AG04450 (cell line): ENCODE measurements at regions of chr7 and their contacts with region 1.

Region 1: DNA sequence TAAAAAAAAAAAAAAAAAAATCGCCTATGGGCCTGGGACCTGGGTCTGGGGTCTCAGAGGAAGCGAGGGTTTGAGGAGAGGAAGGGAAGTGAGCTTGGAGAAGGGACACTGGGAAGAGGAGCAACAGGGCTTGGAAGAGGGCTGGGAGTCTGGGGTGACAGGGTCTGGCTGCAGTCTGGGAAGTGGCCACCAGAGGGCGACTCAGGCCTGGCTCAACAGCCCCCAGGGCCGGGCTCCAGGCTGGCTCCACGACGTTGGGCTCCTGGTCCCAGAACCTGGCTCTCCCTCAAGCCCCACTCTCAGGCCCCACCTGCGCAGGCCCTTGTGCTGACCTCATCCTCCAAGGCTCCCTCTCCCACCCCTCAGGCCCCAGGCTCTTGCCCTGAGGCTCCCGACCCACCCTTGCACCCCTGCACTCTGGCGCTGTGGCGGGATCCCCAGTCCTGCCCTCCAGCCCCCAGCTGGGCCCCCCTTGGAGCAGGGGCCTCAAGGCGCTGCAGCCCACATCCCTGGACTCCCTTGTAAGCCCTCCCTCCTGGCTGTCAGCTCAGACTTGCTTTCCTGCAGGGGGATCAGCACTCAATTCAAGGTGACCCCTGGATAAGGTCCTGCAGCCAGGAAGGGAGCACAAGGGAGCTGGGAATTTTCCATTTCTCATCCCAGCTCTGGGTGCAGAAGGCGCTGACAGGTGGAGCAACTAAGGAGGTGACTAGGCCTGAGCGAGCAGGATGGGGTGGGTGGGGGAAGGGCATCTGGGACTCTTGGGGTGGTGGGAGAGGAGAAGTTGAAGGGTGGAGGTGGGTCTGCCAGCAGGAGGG is 5.4 kb upstream of the SPACDR start:
- DNase-seq: no peak
- H3K4me3 ChIP-seq: no peak overlapping the region
- H3K27ac ChIP-seq: no peak overlapping the region
- H3K27me3 ChIP-seq: no peaks in the 10 kb centered on the region
- CTCF ChIP-seq: peak; percentile 90

Region 2: GRCh38 chr7:100418930-100419659 is 50.3 kb before region 1 on chr7:
- CTCF ChIA-PET with region 1: no interaction called
- POLR2A ChIA-PET with region 1: no interaction called
- DNase-seq: no peak
- H3K4me3 ChIP-seq: no peak overlapping the region
- H3K27ac ChIP-seq: no peak overlapping the region
- H3K27me3 ChIP-seq: no peaks in the 10 kb centered on the region
- CTCF ChIP-seq: 0 out of 2 replicates have a peak, but pooled peaks have one; percentile 9

Region 3: GRCh38 chr7:100455206-100455605 is 14.2 kb before region 1 on chr7:
- CTCF ChIA-PET with region 1: interaction called, 12 read pairs
- POLR2A ChIA-PET with region 1: no interaction called
- DNase-seq: no peak
- H3K4me3 ChIP-seq: no peak overlapping the region
- H3K27ac ChIP-seq: no peak overlapping the region
- H3K27me3 ChIP-seq: no peaks in the 10 kb centered on the region
- CTCF ChIP-seq: no peak

Region 4: GRCh38 chr7:100575203-100575631 is 105.8 kb after region 1 on chr7:
- CTCF ChIA-PET with region 1: no interaction called
- POLR2A ChIA-PET with region 1: no interaction called
- DNase-seq: no peak
- H3K4me3 ChIP-seq: no peak overlapping the region
- H3K27ac ChIP-seq: no peak overlapping the region
- H3K27me3 ChIP-seq: peaks cover 2% of the 10 kb centered on the region
- CTCF ChIP-seq: no peak

Region 5: DNA sequence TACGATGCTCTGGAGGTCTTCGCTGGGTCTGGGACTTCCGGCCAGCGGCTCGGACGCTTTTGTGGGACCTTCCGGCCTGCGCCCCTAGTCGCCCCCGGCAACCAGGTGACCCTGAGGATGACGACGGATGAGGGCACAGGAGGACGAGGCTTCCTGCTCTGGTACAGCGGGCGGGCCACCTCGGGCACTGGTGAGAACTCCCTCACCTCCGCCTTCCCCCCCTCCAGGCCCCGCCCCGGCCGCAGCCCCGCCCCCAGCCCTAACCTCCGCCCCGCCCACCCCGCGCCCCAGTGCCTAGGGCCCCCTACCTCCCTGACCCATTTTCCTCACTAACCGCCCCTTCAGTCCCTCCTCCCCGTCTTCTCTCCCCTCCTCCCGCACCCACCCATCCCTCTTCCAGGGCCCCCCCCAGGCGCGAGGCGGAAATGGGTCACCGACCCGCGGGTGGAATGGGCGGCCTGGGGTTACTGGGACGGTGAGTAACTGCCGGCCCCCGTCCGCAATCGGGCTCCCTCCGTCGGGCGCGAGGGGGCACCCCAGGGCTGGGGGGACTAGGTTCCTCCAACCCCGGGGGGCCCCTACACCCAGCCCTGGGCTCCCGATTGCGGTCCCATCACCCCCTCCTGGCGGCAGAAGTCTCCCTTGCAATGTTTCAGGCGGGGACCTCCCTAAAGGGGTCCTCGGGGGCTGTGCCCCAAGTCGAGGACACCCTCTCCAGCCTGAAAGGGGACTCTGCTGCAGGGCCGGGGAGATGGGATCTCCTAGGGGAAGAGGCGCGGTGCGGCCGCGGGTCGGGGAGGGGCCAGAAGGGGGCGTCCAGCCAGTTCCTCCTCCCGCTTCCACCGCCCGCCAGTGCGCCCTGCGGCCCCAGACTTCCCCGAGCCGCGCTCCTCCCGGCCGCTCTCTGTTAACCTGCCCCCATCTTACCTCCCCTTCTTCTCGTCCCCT is 134.9 kb after region 1 on chr7:
- CTCF ChIA-PET with region 1: interaction called, 14 read pairs
- POLR2A ChIA-PET with region 1: no interaction called
- DNase-seq: no peak
- H3K4me3 ChIP-seq: peak overlapping the region; percentile 94
- H3K27ac ChIP-seq: peak overlapping the region; percentile 77
- H3K27me3 ChIP-seq: no peaks in the 10 kb centered on the region
- CTCF ChIP-seq: peak; percentile 46

Region 6: DNA sequence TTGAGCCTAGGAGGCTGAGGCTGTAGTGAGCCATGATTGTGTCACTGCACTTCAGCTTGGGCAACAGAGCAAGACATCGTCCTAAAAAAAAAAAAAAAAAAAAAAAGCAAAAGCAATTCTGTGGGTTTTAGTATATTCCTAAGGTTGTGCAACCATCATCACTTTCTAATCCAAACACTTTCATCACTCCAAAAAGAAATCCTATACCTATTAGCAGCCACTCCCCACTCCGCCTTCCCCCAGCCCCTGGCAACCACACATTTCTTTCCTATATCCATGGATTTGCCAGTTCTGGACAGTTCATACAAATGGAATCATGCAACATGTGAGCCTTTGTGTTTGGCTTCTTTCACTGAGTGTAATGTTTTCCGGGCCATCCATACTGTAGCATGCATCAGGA is 284.3 kb after region 1 on chr7:
- CTCF ChIA-PET with region 1: no interaction called
- POLR2A ChIA-PET with region 1: no interaction called
- DNase-seq: no peak
- H3K4me3 ChIP-seq: no peak overlapping the region
- H3K27ac ChIP-seq: no peak overlapping the region
- H3K27me3 ChIP-seq: peaks cover 40% of the 10 kb centered on the region
- CTCF ChIP-seq: no peak

Region 7: DNA sequence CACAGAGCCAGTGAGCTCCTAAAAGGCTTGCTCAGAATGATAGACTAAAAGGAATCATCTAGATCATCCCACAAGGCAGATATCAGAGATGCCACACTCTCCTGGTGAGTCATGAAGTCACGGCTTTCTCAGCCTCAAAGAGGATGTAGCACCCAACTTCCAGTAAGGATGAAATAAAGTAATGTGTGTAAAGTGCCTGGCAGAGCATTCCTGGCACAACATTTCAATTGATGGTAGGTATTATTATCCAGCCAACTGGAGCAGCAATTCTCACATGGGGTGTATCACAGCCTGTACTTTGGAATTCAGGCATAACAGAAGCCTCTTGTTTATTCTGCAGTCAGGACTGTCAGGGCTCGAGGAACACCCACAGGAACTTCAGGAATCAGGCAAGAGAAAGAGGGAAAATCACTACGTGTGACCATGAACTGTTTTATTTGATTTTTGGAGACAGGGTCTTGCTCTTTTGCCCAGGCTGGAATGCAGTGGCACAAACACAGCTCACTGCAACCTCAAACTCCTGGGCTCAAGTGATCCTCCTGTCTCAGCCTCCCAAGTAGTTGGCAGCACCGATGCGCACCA is 715.9 kb after region 1 on chr7:
- CTCF ChIA-PET with region 1: interaction called, 10 read pairs
- POLR2A ChIA-PET with region 1: no interaction called
- DNase-seq: no peak
- H3K4me3 ChIP-seq: no peak overlapping the region
- H3K27ac ChIP-seq: no peak overlapping the region
- H3K27me3 ChIP-seq: peaks cover 11% of the 10 kb centered on the region
- CTCF ChIP-seq: no peak